ENCODE measurements at regions of chr2 and their contacts with region 1.

Region 1: GRCh38 chr2:28292491-28292890 is 100.2 kb upstream of the FOSL2 start:
- DNase-seq: no peak
- ATAC-seq: no peak
- H3K4me3 ChIP-seq: no peak overlapping the region
- H3K27ac ChIP-seq: no peak overlapping the region
- H3K4me1 ChIP-seq: no peaks in the 10 kb centered on the region
- H3K27me3 ChIP-seq: no peaks in the 10 kb centered on the region
- CTCF ChIP-seq: no peak

Region 2: DNA sequence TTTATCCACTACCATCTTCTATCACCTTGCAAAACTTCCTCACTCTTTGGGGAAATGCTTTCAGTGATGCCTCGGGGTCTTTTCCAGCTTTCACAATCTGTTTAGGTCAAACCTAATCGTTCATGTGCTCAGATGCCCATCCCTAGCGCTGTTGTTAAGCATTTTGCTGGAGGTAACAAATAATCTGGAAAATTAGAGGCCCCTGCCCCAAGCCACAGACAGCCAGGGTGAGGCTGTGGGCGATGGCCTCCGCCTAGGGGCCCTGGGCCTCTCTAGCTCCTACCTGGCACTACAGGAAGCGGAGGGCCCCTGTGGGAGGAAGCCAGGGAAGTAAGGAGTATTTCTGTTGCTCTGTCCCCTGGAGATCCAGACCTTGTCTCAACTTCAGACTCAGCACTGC is 87.7 kb after region 1 on chr2:
- CTCF ChIA-PET with region 1: no interaction called
- POLR2A ChIA-PET with region 1: interaction called, 11 read pairs
- in situ Hi-C with region 1: no loop called
- intact Hi-C with region 1: no loop called
- DNase-seq: no peak
- ATAC-seq: no peak
- H3K4me3 ChIP-seq: no peak overlapping the region
- H3K27ac ChIP-seq: no peak overlapping the region
- H3K4me1 ChIP-seq: no peaks in the 10 kb centered on the region
- H3K27me3 ChIP-seq: no peaks in the 10 kb centered on the region
- CTCF ChIP-seq: no peak

Measured in Panc1 (cell line).